Endothelial cell of umbilical vein (primary cell): ENCODE measurements at regions of chr10 and their contacts with region 1.

Region 1: GRCh38 chr10:13913897-13914296 is 327.1 kb downstream of the PRPF18 start:
- DNase-seq: no peak
- H3K4me3 ChIP-seq: no peak overlapping the region
- H3K27ac ChIP-seq: no peak overlapping the region
- H3K4me1 ChIP-seq: no peaks in the 10 kb centered on the region
- H3K27me3 ChIP-seq: no peaks in the 10 kb centered on the region
- CTCF ChIP-seq: no peak
- POLR2A ChIP-seq: no peak

Region 2: GRCh38 chr10:13899941-13900340 is 14.0 kb before region 1 on chr10:
- CTCF ChIA-PET with region 1: interaction called, 15 read pairs
- POLR2A ChIA-PET with region 1: no interaction called
- dilution Hi-C with region 1: no loop called
- intact Hi-C with region 1: no loop called
- DNase-seq: no peak
- H3K4me3 ChIP-seq: no peak overlapping the region
- H3K27ac ChIP-seq: no peak overlapping the region
- H3K4me1 ChIP-seq: no peaks in the 10 kb centered on the region
- H3K27me3 ChIP-seq: no peaks in the 10 kb centered on the region
- CTCF ChIP-seq: no peak
- POLR2A ChIP-seq: no peak

Region 3: GRCh38 chr10:14024329-14025202 is 110.7 kb after region 1 on chr10:
- CTCF ChIA-PET with region 1: no interaction called
- POLR2A ChIA-PET with region 1: no interaction called
- dilution Hi-C with region 1: no loop called
- intact Hi-C with region 1: no loop called
- DNase-seq: no peak
- H3K4me3 ChIP-seq: no peak overlapping the region
- H3K27ac ChIP-seq: no peak overlapping the region
- H3K4me1 ChIP-seq: no peaks in the 10 kb centered on the region
- H3K27me3 ChIP-seq: peaks cover 8 to 11% of the 10 kb centered on the region in 2 experiments
- CTCF ChIP-seq: no peak
- POLR2A ChIP-seq: no peak